ENCODE measurements at regions of chr14 and their contacts with region 1.

Region 1: GRCh38 chr14:77760381-77761246 is at the start of gene SNW1:
- DNase-seq: peak; percentile 91 to 92
- H3K4me3 ChIP-seq: peak within 1 kb of the TSS; percentile 95
- H3K4me3 Mint-ChIP-seq: peak within 1 kb of the TSS; percentile 88
- H3K27ac Mint-ChIP-seq: peak within 1 kb of the TSS; percentile 96
- H3K4me1 ChIP-seq: 0 out of 2 replicates have a peak, but pooled peaks cover 5% of the 10 kb centered on the region
- H3K4me1 Mint-ChIP-seq: no peaks in the 10 kb centered on the region
- H3K27me3 ChIP-seq: no peaks in the 10 kb centered on the region
- H3K27me3 Mint-ChIP-seq: no peaks in the 10 kb centered on the region
- CTCF ChIP-seq: no peak
- total RNA-seq, gene SNW1: 105 and 119 TPM in 2 replicates

Region 2: DNA sequence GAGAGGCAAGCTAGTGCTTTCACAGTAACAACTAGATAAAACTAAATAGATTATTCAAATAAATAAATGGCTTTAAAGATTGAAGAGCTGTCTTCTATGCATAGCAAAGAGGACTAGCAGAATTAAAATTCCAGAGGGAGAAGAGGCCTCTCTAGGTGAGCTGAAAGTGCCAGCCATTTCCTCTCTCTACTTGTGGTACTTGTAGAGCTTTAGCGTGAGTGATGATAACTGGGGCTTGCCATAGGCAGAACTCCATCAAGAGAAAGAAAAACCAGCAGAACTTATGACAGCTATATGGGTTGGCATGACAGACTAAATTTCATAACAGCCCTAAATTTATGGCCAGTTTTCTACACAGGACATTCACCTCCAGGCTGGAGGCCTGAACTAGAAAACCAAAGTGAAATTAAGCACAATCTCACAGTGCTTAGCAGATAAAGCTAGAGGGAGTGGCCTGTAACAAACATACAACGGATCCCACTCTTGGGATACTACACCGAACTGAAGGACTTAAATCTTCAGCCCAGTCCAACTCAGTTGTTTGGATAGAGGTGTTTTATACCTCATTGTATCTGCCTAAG is 155.1 kb before region 1 on chr14:
- CTCF ChIA-PET with region 1: no interaction called
- POLR2A ChIA-PET with region 1: interaction called, 11 read pairs
- intact Hi-C with region 1: no loop called
- DNase-seq: peak in 1 of 2 experiments; percentile 8
- H3K4me3 ChIP-seq: no peak overlapping the region
- H3K4me3 Mint-ChIP-seq: peak overlapping the region; percentile 22
- H3K27ac Mint-ChIP-seq: peak overlapping the region; percentile 55
- H3K4me1 ChIP-seq: peaks cover 58% of the 10 kb centered on the region
- H3K4me1 Mint-ChIP-seq: peaks cover 35% of the 10 kb centered on the region
- H3K27me3 ChIP-seq: no peaks in the 10 kb centered on the region
- H3K27me3 Mint-ChIP-seq: no peaks in the 10 kb centered on the region
- CTCF ChIP-seq: no peak

Region 3: DNA sequence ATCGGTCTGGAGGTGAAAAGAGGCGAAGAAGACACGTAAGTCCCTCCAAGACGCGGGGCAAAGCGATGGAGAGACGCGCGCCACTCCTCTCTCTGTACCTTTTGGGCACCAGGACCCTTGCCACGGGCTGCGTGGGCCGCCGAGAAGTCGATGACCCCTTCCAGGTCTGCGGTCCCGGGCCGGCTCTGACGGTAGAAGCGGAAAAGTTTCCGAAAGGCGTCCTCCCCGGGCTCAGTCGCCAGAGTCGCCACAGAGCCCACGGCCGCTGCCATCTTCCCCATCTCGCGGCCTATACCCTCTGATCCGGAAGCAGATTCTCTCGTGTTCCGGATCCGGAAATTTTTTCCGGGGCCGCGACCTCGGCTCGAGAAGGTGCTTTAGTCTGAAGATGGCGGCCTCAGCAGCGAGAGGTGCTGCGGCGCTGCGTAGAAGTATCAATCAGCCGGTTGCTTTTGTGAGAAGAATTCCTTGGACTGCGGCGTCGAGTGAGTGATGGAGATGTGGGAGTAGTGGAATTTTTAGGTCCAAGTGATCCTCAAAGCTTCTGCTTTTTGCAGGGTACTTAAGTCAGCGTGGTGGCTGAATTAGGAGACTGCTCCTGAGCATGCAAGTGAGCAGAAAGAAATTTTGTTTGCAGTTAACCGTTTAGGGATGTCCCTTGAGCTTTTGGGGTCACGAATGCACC is 52.7 kb before region 1 on chr14 and contains the starts of genes ALKBH1 and SLIRP:
- CTCF ChIA-PET with region 1: no interaction called
- POLR2A ChIA-PET with region 1: no interaction called
- intact Hi-C with region 1: no loop called
- DNase-seq: peak; percentile 83 to 87
- H3K4me3 ChIP-seq: peak within 1 kb of the TSS; percentile 71
- H3K4me3 Mint-ChIP-seq: peak within 1 kb of the TSS; percentile 86
- H3K27ac Mint-ChIP-seq: peak within 1 kb of the TSS; percentile 77
- H3K4me1 ChIP-seq: peaks cover 8% of the 10 kb centered on the region; the same call in 1 of the 2 replicates
- H3K4me1 Mint-ChIP-seq: peaks cover 17% of the 10 kb centered on the region
- H3K27me3 ChIP-seq: no peaks in the 10 kb centered on the region
- H3K27me3 Mint-ChIP-seq: no peaks in the 10 kb centered on the region
- CTCF ChIP-seq: no peak
- total RNA-seq, gene ALKBH1: 17.1 and 18.7 TPM in 2 replicates
- total RNA-seq, gene SLIRP: 204 and 208 TPM in 2 replicates

Region 4: DNA sequence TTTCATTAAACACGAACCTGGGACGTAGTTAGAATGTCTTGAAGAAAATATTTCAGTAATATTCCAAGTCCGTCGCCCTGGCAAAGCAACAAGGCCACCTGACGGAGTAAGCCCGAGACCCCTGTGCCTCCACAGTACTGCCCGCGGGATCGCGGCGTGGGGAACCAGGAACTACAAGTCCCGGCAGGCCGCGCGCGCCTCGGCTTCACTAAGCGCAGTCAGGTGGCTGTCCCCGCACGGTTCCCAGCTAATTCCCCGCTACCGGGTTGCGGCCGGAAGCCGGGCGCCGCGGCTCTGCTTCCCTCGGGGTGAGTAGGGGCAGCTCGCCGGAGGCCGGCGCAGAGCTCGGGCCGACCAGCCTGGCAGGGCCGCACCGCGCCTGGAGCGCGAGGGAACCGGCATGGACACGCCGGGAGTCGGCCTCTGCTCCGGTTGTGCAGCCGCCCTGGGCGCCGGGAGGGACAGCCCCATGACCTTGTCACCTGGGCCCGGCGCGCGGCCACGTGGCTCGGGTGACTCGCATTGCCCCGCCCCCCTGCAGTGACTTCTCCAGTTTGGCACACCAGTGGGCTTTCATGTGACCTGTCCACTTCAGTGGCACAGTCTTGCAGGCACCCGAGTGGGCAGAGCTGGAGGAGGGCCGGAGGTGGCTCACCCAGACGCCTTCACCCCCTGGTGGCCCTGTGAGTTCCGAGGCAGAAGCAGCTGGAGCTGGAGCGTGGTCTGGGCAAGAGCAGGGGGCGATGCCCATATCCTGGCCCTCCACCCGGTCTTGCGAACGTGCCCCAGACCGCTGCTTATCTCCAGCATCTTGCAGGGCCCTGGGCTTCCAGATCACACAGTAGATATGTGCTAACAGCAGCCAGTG is 39.5 kb after region 1 on chr14 and contains the start of gene ADCK1:
- CTCF ChIA-PET with region 1: interaction called, 3 read pairs
- POLR2A ChIA-PET with region 1: interaction called, 3 read pairs
- intact Hi-C with region 1: loop called (anchors 1 kb)
- DNase-seq: peak; percentile 87 to 88
- H3K4me3 ChIP-seq: peak within 1 kb of the TSS; percentile 70
- H3K4me3 Mint-ChIP-seq: peak within 1 kb of the TSS; percentile 83
- H3K27ac Mint-ChIP-seq: peak within 1 kb of the TSS; percentile 86
- H3K4me1 ChIP-seq: peaks cover 24% of the 10 kb centered on the region
- H3K4me1 Mint-ChIP-seq: peaks cover 7% of the 10 kb centered on the region
- H3K27me3 ChIP-seq: no peaks in the 10 kb centered on the region
- H3K27me3 Mint-ChIP-seq: no peaks in the 10 kb centered on the region
- CTCF ChIP-seq: peak; percentile 32 to 51
- total RNA-seq, gene ADCK1: 8.8 and 9.7 TPM in 2 replicates

Region 5: DNA sequence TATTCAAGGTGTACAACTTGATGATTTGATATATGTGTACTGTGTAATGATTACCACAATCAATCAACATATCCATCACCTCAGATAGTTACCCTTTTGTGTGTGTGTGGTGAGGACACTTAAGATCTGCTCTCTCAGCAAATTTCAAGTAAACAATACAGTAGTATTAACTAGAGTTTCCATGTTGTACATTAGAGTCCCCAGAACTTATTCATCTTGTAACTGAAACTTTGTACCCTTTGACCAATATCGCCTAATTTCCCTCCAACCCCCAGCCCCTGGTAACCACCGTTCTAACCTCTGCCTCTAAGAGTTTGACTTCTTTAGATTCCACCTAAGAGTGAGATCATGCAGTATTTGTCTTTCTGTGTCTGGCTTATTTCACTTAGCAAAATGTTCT is 51.4 kb after region 1 on chr14:
- CTCF ChIA-PET with region 1: interaction called, 4 read pairs
- POLR2A ChIA-PET with region 1: no interaction called
- intact Hi-C with region 1: loop called (anchors 1 kb)
- DNase-seq: no peak
- H3K4me3 ChIP-seq: no peak overlapping the region
- H3K4me3 Mint-ChIP-seq: no peak overlapping the region
- H3K27ac Mint-ChIP-seq: no peak overlapping the region
- H3K4me1 ChIP-seq: no peaks in the 10 kb centered on the region
- H3K4me1 Mint-ChIP-seq: no peaks in the 10 kb centered on the region
- H3K27me3 ChIP-seq: no peaks in the 10 kb centered on the region
- H3K27me3 Mint-ChIP-seq: no peaks in the 10 kb centered on the region
- CTCF ChIP-seq: no peak